Heart right ventricle (tissue), 16 donors: ENCODE measurements at regions of chr18 and their contacts with region 1.

Region 1: DNA sequence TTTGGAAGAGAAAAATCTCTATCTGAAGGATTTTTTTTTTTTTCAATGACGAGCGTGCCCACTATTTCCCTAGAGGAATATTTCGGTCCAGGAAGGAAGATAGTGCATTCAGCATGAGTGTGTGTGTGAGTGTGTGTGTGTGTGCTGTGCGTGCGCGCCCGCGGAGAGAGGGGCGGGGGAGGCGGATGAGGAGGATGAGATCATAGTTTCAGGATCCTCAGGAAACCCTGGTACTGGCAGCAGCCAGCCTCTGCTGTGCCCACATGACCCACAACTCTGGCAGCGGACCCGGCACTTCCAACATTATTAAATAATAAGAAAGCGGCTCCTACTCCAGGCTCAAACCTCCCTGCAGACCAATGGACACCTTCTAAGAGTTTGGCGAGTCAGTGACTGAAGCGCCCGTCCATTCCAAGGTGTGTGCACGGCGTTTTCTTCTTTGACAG is 217.0 kb upstream of the DTNA start:
- DNase-seq: peak; percentile 74 to 85
- ATAC-seq: peak; percentile 87 to 96 (median 93)
- H3K4me3 ChIP-seq: peak overlapping the region; percentile 42 to 69 (median 65)
- H3K27ac ChIP-seq: peak overlapping the region; percentile 71 to 91 (median 84)
- H3K4me1 ChIP-seq: peaks cover 0 to 28% (median 10%) of the 10 kb centered on the region in 9 donors
- H3K27me3 ChIP-seq: peaks cover 0 to 40% (median 0%) of the 10 kb centered on the region in 7 donors
- CTCF ChIP-seq: no peak

Region 2: GRCh38 chr18:34444622-34445021 is 48.5 kb before region 1 on chr18:
- intact Hi-C with region 1: loop called in 1 of 10 experiments (anchors 5 kb)
- DNase-seq: no peak
- ATAC-seq: no peak
- H3K4me3 ChIP-seq: no peak overlapping the region
- H3K27ac ChIP-seq: no peak overlapping the region
- H3K4me1 ChIP-seq: no peaks in the 10 kb centered on the region
- H3K27me3 ChIP-seq: no peaks in the 10 kb centered on the region
- CTCF ChIP-seq: no peak

Region 3: DNA sequence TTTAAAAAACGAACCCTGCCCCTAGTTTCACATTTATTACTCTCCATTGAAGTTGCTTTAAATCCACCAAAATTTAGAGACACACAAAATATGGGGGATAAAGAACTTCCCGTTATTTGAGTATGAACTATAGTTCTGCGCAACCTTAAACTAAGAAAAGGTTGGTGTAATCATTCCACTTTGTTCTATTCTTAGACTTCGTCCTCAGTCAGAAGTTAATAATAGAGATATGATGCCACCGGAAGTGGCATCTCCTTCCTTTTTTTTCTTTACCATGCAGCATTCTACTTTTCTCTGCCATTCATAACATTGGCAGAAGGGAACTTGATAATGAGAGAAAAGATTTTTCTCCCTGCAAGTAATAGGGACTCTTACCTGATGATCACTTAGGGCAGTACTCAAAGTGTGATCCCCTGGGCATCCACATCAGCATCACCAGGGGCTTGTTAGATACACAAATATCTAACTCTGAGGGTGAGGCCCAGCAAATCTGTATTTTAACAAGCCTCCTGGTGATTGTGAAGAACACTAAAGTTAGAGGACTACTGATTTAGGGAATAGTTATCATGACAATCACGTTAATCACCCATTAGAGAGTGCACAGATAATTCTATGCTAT is 69.2 kb after region 1 on chr18:
- intact Hi-C with region 1: loop called in 1 of 10 experiments (anchors 5 kb)
- DNase-seq: no peak
- ATAC-seq: peak in 7 of 8 donors; percentile 63 to 93 (median 87)
- H3K4me3 ChIP-seq: peak overlapping the region in 2 of 10 donors; percentile 4
- H3K27ac ChIP-seq: peak overlapping the region in 9 of 10 donors; percentile 12 to 82 (median 66)
- H3K4me1 ChIP-seq: peaks cover 0 to 14% (median 0%) of the 10 kb centered on the region in 9 donors
- H3K27me3 ChIP-seq: no peaks in the 10 kb centered on the region
- CTCF ChIP-seq: no peak

Region 4: DNA sequence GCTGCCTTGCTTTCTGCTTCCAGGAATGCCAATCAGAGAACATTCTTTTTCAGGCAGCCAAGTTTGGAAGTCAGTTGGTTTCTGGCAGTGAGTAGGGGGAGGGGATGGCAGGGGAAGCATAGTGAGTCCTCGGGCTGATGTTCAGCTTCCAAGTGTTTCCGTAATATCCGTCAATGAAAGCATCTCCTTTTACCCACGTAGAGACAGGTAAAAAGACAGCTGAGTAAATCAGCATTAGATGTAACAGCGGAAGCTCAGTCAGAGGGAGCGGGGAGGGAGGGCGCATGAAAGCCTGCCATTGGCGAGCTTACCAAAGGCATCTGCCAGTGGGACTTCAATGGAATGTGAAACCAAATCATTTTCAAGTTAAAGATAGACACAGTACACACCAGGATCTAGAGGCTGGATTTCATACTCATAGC is 99.8 kb after region 1 on chr18:
- intact Hi-C with region 1: loop called in 6 of 10 experiments (anchors 1 to 10 kb)
- DNase-seq: peak; percentile 48 to 58
- ATAC-seq: peak; percentile 80 to 94 (median 92)
- H3K4me3 ChIP-seq: peak overlapping the region in 9 of 10 donors; percentile 29 to 54 (median 48)
- H3K27ac ChIP-seq: peak overlapping the region; percentile 11 to 87 (median 74)
- H3K4me1 ChIP-seq: peaks cover 0 to 42% (median 3%) of the 10 kb centered on the region in 9 donors
- H3K27me3 ChIP-seq: no peaks in the 10 kb centered on the region
- CTCF ChIP-seq: no peak

Region 5: DNA sequence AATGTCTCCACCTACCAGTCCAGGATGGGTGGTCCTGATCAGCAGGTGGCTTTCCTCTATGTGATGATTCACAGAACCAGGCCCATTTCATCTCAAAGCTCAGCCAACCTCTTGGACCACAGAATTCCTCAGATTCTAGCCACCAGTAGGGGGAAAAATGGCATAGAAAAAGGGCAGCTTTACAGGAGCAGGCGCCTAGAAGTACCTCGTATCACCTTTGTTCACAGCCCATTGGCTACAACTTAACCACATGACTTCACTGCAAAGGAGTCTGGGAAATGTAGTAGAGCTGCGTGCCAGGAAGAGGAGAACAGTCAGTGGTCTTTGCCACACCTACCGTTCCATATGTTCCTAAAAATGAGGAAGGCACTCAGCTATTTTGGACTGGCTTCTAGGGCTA is 154.1 kb after region 1 on chr18:
- intact Hi-C with region 1: loop called in 3 of 10 experiments (anchors 5 to 10 kb)
- DNase-seq: no peak
- ATAC-seq: no peak
- H3K4me3 ChIP-seq: no peak overlapping the region
- H3K27ac ChIP-seq: no peak overlapping the region
- H3K4me1 ChIP-seq: peaks cover 0 to 50% (median 26%) of the 10 kb centered on the region in 9 donors
- H3K27me3 ChIP-seq: no peaks in the 10 kb centered on the region
- CTCF ChIP-seq: no peak

Region 6: DNA sequence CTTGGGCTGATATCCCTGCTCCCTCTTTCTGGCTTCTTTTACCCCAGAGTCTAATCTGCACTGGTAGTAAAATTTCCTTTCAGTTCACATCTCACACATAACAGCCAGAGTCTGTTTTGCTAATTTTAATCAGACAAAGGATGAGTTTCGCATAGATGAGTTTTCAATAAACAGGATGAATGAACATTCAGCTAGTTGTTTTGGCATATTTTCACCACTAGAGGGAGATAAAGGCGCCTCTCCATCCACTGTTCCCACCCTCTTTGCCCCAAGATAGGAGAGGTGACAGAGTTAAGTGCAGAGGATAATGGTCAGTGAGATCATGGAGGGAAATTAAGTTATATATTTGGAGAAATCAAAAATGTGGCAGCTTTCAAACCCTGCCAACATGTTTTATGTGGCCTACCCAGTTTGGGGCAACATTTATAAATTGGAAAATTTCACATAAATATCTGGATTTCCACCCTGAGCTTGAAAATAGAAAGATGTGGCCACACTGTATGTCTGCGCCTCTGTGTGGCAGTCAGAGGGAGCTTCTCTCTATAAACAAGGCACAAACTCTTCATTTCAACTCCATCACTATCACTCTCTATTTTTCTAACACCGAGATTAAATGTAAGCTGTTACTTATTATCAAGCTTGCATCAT is 168.5 kb after region 1 on chr18:
- intact Hi-C with region 1: loop called in 1 of 10 experiments (anchors 5 kb)
- DNase-seq: no peak
- ATAC-seq: peak in 7 of 8 donors; percentile 41 to 66 (median 55)
- H3K4me3 ChIP-seq: no peak overlapping the region
- H3K27ac ChIP-seq: peak overlapping the region in 5 of 10 donors; percentile 86 to 92 (median 87)
- H3K4me1 ChIP-seq: peaks cover 2 to 49% (median 28%) of the 10 kb centered on the region in 9 donors
- H3K27me3 ChIP-seq: no peaks in the 10 kb centered on the region
- CTCF ChIP-seq: peak; percentile 68 to 82 (median 77)